Activated CD8-positive, alpha-beta T cell treated with anti-CD3 and anti-CD28 coated beads, Interleukin-2, amount 10 ng/mL, durations not matched to agents 7 days and 5 days (primary cell): ENCODE measurements at regions of chr3 and their contacts with region 1.

Region 1: DNA sequence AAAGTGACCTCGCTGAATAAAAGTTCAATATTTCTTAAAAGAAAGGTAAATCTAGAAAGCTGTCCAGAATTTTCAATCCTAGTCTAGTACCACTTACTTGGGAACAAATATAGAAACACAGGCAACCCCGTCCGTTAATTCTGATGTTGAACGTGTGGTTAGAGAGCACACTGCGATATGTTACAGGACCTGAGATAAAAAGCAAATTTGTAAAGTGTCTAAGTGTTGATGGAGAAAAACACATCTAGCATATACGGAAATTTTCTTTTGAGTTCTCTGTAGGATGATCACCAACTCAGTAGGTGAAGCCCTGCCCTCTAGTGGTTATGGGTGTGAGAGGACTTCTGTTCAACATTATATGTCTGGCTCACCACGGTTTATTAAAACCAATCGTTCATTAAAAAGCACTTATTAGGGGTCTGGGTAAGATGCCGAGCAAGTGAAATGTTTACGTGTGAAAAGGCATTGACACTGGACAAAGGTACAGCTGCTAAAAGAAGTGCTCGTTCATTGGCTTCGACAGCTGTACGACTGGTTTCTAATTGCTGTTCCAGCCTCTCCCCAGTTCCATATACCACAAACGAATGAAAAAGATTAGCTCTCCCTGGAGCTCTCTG is 1.0 kb upstream of the ATP2C1 start:
- DNase-seq: peak; percentile 83
- ATAC-seq: peak; percentile 53
- H3K4me3 Mint-ChIP-seq: peak overlapping the region; percentile 95
- H3K27ac Mint-ChIP-seq: peak overlapping the region; percentile 99
- H3K4me1 Mint-ChIP-seq: peaks cover 39% of the 10 kb centered on the region
- H3K27me3 Mint-ChIP-seq: no peaks in the 10 kb centered on the region

Region 2: DNA sequence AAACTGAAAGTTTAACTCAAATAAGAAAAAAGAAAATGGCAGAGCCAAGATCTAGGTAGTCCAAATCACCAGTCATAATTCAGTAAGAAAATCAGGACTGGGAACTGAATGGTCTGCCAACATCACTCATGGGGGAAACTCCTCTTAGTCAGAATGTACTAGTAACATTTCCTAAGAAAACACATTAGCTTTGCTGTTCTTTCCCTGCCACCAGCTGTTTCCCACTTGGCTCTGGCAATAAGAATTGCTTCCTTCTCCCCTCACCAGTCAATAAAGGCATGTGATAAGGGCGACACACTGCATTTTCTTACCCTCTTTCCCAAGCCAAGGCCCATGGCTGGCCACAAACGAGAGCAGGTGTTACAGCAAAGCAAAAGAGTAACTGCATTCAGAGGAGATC is 192.3 kb before region 1 on chr3:
- CTCF ChIA-PET with region 1: interaction called, 10 read pairs
- POLR2A ChIA-PET with region 1: no interaction called
- DNase-seq: no peak
- ATAC-seq: no peak
- H3K4me3 Mint-ChIP-seq: no peak overlapping the region
- H3K27ac Mint-ChIP-seq: no peak overlapping the region
- H3K4me1 Mint-ChIP-seq: no peaks in the 10 kb centered on the region
- H3K27me3 Mint-ChIP-seq: no peaks in the 10 kb centered on the region

Region 3: GRCh38 chr3:130746246-130747039 is 146.4 kb before region 1 on chr3 and contains the start of gene PIK3R4:
- CTCF ChIA-PET with region 1: interaction called, 17 read pairs
- POLR2A ChIA-PET with region 1: interaction called, 11 read pairs
- DNase-seq: peak; percentile 98
- ATAC-seq: peak; percentile 76
- H3K4me3 Mint-ChIP-seq: peak within 1 kb of the TSS; percentile 91
- H3K27ac Mint-ChIP-seq: peak within 1 kb of the TSS; percentile 95
- H3K4me1 Mint-ChIP-seq: peaks cover 38% of the 10 kb centered on the region
- H3K27me3 Mint-ChIP-seq: no peaks in the 10 kb centered on the region
- total RNA-seq, gene PIK3R4: 24.1 to 24.6 TPM

Region 4: DNA sequence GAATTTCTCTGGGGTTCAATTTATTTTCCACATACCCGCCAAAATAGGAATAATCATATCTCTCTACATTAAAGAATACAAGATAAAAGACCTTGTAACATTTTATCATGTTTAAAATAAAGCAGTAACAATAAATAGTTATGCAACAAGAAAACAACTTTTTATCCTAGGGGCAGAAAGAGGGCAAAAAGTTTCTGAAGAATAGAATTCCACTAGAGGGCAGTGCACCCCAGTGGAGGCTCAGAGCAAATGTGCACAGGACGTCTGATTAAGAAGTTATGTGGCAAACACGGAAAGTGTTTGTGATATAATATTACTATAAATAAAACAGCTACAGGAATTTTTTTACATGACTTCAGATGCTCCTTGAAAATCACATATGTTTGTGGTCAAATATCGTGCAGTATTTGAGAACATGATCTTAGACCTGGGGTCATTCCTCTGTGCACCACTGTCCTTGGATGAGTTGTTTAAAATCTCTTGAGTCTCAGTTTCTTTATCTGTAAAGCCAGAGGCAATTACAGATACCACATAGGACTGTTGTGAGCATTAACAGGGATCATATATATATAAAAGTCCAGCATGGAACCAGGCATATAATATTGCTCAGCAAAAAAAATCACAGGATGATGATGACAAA is 133.0 kb before region 1 on chr3:
- CTCF ChIA-PET with region 1: interaction called, 95 read pairs
- POLR2A ChIA-PET with region 1: interaction called, 21 read pairs
- DNase-seq: peak; percentile 75
- ATAC-seq: peak; percentile 86
- H3K4me3 Mint-ChIP-seq: no peak overlapping the region
- H3K27ac Mint-ChIP-seq: no peak overlapping the region
- H3K4me1 Mint-ChIP-seq: peaks cover 9% of the 10 kb centered on the region
- H3K27me3 Mint-ChIP-seq: peaks cover 6% of the 10 kb centered on the region

Region 5: DNA sequence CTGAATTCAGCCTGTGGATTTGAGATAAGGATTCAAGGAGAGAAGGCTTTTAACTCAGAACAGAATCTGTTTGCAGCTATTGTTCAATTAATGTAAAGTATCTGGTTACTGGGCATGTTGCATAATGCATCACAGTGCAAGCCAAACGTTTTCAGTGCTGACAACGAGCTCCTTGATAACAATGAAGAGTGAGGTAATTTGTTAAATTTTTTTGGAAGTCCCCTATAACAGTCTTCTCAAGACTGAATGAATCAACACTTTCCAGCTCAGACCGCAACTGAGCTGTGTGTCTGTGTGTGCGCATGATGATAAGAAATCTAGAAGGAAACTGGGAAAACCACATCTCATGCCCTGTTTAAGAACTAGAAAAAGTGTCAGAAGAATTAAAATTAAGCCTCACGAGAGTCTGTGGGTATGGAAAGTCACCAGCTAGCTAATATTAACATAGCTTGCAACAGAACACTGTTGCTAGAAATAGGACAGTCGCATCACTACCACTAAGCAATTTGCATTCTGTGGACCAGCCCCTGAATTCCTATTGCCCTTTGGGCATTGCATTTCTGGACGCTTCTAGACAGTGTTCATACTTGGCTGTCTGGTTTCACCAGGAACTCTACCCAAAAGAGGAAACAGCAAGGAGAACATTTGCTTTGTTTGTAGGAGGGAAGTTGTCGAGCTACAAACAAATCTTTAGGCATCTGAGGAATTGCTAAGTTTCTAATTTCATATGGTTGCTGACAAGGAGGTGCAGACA is 42.6 kb before region 1 on chr3:
- CTCF ChIA-PET with region 1: interaction called, 62 read pairs
- POLR2A ChIA-PET with region 1: interaction called, 58 read pairs
- DNase-seq: peak; percentile 45
- ATAC-seq: peak; percentile 88
- H3K4me3 Mint-ChIP-seq: no peak overlapping the region
- H3K27ac Mint-ChIP-seq: no peak overlapping the region
- H3K4me1 Mint-ChIP-seq: peaks cover 20% of the 10 kb centered on the region
- H3K27me3 Mint-ChIP-seq: peaks cover 11% of the 10 kb centered on the region

Region 6: GRCh38 chr3:130905551-130905950 is 12.7 kb after region 1 on chr3:
- CTCF ChIA-PET with region 1: interaction called, 7 read pairs
- POLR2A ChIA-PET with region 1: interaction called, 11 read pairs
- DNase-seq: no peak
- ATAC-seq: no peak
- H3K4me3 Mint-ChIP-seq: no peak overlapping the region
- H3K27ac Mint-ChIP-seq: no peak overlapping the region
- H3K4me1 Mint-ChIP-seq: peaks cover 45% of the 10 kb centered on the region
- H3K27me3 Mint-ChIP-seq: no peaks in the 10 kb centered on the region

Region 7: GRCh38 chr3:130960139-130960795 is 67.4 kb after region 1 on chr3:
- CTCF ChIA-PET with region 1: no interaction called
- POLR2A ChIA-PET with region 1: no interaction called
- DNase-seq: no peak
- ATAC-seq: no peak
- H3K4me3 Mint-ChIP-seq: no peak overlapping the region
- H3K27ac Mint-ChIP-seq: no peak overlapping the region
- H3K4me1 Mint-ChIP-seq: no peaks in the 10 kb centered on the region
- H3K27me3 Mint-ChIP-seq: no peaks in the 10 kb centered on the region

Region 8: GRCh38 chr3:131026321-131027178 is 133.7 kb after region 1 on chr3 and contains the starts of genes ASTE1 and NEK11:
- CTCF ChIA-PET with region 1: interaction called, 26 read pairs
- POLR2A ChIA-PET with region 1: interaction called, 25 read pairs
- DNase-seq: peak; percentile 94
- ATAC-seq: peak; percentile 97
- H3K4me3 Mint-ChIP-seq: peak within 1 kb of the TSS; percentile 82
- H3K27ac Mint-ChIP-seq: peak within 1 kb of the TSS; percentile 96
- H3K4me1 Mint-ChIP-seq: peaks cover 41% of the 10 kb centered on the region
- H3K27me3 Mint-ChIP-seq: no peaks in the 10 kb centered on the region
- total RNA-seq, gene ASTE1: 11.7 to 14.0 TPM
- total RNA-seq, gene NEK11: 0.58 to 1.7 TPM